B cell (primary cell): ENCODE measurements at regions of chr20 and their contacts with region 1.

Region 1: DNA sequence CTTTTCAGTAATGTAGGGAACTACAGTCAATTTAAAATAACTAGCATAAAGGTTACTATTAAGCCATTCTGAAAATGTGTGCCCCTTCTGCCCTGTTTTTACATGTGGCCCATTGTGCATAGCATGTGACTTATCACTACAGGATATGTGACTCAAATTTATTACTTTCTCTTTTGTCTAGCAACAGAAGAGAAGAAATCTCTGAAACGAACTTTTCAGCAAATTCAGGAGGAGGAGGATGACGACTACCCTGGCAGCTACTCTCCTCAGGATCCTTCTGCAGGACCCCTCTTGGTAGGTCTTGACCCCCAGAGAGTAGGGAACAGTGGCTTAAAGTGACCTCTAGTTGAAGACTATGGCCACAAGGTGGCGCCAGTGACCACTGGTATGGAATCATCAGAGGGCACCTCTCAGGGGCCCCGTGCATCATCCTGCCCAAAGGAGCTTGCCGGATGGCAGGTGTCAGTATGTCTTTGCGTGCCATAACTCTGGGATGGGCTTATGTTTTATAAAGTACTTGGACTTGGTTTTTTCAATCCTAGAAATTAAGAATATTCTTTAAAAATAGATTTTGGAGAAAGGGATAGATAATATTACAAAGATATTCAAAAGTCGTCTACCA is 23.9 kb downstream of the RPRD1B start:
- DNase-seq: peak; percentile 86
- ATAC-seq: peak; percentile 96
- H3K4me3 ChIP-seq: no peak overlapping the region
- H3K4me3 Mint-ChIP-seq: no peak overlapping the region
- H3K27ac ChIP-seq: no peak overlapping the region
- H3K27ac Mint-ChIP-seq: peak overlapping the region; percentile 59
- H3K4me1 ChIP-seq: peaks cover 0 to 3% of the 10 kb centered on the region in 2 donors
- H3K4me1 Mint-ChIP-seq: peaks cover 13% of the 10 kb centered on the region
- H3K27me3 ChIP-seq: no peaks in the 10 kb centered on the region
- H3K27me3 Mint-ChIP-seq: no peaks in the 10 kb centered on the region
- CTCF ChIP-seq: peak; percentile 98

Region 2: DNA sequence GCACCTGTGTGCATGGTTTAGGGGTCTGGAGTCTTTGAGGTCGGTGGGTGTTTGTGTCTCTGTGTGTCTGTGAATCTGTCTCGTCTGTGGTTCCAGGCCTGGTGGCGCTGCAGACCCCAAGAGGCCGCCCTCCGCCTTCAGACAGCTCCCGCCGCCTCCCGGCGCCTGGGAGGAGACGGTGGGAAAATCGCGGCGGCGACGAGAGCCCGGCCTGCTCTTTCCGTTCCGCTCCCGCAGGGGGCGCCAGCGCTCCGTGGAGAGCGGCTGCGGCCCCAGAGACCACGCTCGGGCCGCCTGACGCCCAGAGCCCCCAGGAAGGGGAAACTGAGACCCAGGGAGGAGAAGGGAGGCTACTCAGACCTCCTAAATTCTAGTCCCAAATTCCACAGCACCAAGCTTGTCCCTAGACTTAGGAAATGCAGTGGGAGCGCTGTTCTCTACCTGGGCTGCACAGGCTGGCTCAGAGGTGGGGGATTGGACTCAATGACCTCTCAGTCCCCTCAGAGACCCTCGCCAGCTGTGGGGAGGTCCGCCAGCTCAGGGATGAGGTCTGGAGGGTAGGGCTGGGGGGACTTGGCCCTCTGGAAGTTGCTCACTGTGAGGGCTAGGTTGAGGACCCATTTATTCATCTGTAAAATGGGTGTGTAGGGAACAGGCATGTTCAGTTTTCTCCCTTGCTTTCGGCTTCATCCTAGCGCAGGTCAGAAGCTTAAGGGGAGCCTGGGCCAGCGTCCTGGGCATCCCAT is 492.9 kb before region 1 on chr20:
- CTCF ChIA-PET with region 1: interaction called, 15 read pairs
- POLR2A ChIA-PET with region 1: no interaction called
- intact Hi-C with region 1: no loop called
- DNase-seq: peak; percentile 67
- ATAC-seq: peak; percentile 49
- H3K4me3 ChIP-seq: no peak overlapping the region
- H3K4me3 Mint-ChIP-seq: no peak overlapping the region
- H3K27ac ChIP-seq: no peak overlapping the region
- H3K27ac Mint-ChIP-seq: no peak overlapping the region
- H3K4me1 ChIP-seq: peaks cover 3 to 5% of the 10 kb centered on the region in 2 donors
- H3K4me1 Mint-ChIP-seq: peaks cover 2% of the 10 kb centered on the region
- H3K27me3 ChIP-seq: peaks cover 0 to 31% (median 13%) of the 10 kb centered on the region in 4 experiments
- H3K27me3 Mint-ChIP-seq: peaks cover 43% of the 10 kb centered on the region
- CTCF ChIP-seq: peak; percentile 96

Region 3: GRCh38 chr20:37726971-37727956 is 330.2 kb before region 1 on chr20:
- CTCF ChIA-PET with region 1: no interaction called
- POLR2A ChIA-PET with region 1: no interaction called
- intact Hi-C with region 1: no loop called
- DNase-seq: no peak
- ATAC-seq: no peak
- H3K4me3 ChIP-seq: no peak overlapping the region
- H3K4me3 Mint-ChIP-seq: no peak overlapping the region
- H3K27ac ChIP-seq: no peak overlapping the region
- H3K27ac Mint-ChIP-seq: no peak overlapping the region
- H3K4me1 ChIP-seq: no peaks in the 10 kb centered on the region
- H3K4me1 Mint-ChIP-seq: peaks cover 33% of the 10 kb centered on the region
- H3K27me3 ChIP-seq: no peaks in the 10 kb centered on the region
- H3K27me3 Mint-ChIP-seq: no peaks in the 10 kb centered on the region
- CTCF ChIP-seq: no peak

Region 4: DNA sequence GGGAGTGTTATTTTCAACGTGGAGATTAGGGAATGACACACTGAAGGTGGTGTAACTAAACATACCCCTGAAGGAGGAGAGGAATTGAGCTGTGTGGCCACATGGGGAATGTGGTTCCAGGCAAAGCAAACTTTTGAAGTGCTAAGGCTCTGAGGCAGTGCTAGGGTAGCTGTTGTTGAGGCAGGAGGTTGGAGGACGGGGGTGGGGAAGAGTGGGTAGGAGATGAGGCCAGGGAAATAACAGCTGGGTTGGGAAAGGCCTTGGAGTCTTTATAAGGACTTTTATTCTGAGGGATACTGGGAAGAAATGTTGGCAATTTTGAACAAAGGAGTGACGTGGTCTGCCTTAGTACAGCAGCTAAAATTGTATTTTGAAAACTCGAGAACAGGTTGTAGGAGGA is 10.9 kb before region 1 on chr20:
- CTCF ChIA-PET with region 1: interaction called, 20 read pairs
- POLR2A ChIA-PET with region 1: no interaction called
- intact Hi-C with region 1: no loop called
- DNase-seq: no peak
- ATAC-seq: no peak
- H3K4me3 ChIP-seq: no peak overlapping the region
- H3K4me3 Mint-ChIP-seq: no peak overlapping the region
- H3K27ac ChIP-seq: no peak overlapping the region
- H3K27ac Mint-ChIP-seq: no peak overlapping the region
- H3K4me1 ChIP-seq: no peaks in the 10 kb centered on the region
- H3K4me1 Mint-ChIP-seq: peaks cover 8% of the 10 kb centered on the region
- H3K27me3 ChIP-seq: no peaks in the 10 kb centered on the region
- H3K27me3 Mint-ChIP-seq: no peaks in the 10 kb centered on the region
- CTCF ChIP-seq: no peak

Region 5: GRCh38 chr20:38084400-38084951 is 27.0 kb after region 1 on chr20:
- CTCF ChIA-PET with region 1: interaction called, 11 read pairs
- POLR2A ChIA-PET with region 1: no interaction called
- intact Hi-C with region 1: no loop called
- DNase-seq: no peak
- ATAC-seq: no peak
- H3K4me3 ChIP-seq: no peak overlapping the region
- H3K4me3 Mint-ChIP-seq: no peak overlapping the region
- H3K27ac ChIP-seq: no peak overlapping the region
- H3K27ac Mint-ChIP-seq: no peak overlapping the region
- H3K4me1 ChIP-seq: no peaks in the 10 kb centered on the region
- H3K4me1 Mint-ChIP-seq: peaks cover 41% of the 10 kb centered on the region
- H3K27me3 ChIP-seq: no peaks in the 10 kb centered on the region
- H3K27me3 Mint-ChIP-seq: no peaks in the 10 kb centered on the region
- CTCF ChIP-seq: no peak

Region 6: GRCh38 chr20:38113401-38114325 is 56.2 kb after region 1 on chr20:
- CTCF ChIA-PET with region 1: interaction called, 39 read pairs
- POLR2A ChIA-PET with region 1: no interaction called
- intact Hi-C with region 1: loop called (anchors 1 kb)
- DNase-seq: no peak
- ATAC-seq: no peak
- H3K4me3 ChIP-seq: no peak overlapping the region
- H3K4me3 Mint-ChIP-seq: no peak overlapping the region
- H3K27ac ChIP-seq: no peak overlapping the region
- H3K27ac Mint-ChIP-seq: no peak overlapping the region
- H3K4me1 ChIP-seq: peaks cover 0 to 3% of the 10 kb centered on the region in 2 donors
- H3K4me1 Mint-ChIP-seq: peaks cover 3% of the 10 kb centered on the region
- H3K27me3 ChIP-seq: no peaks in the 10 kb centered on the region
- H3K27me3 Mint-ChIP-seq: no peaks in the 10 kb centered on the region
- CTCF ChIP-seq: no peak

Region 7: DNA sequence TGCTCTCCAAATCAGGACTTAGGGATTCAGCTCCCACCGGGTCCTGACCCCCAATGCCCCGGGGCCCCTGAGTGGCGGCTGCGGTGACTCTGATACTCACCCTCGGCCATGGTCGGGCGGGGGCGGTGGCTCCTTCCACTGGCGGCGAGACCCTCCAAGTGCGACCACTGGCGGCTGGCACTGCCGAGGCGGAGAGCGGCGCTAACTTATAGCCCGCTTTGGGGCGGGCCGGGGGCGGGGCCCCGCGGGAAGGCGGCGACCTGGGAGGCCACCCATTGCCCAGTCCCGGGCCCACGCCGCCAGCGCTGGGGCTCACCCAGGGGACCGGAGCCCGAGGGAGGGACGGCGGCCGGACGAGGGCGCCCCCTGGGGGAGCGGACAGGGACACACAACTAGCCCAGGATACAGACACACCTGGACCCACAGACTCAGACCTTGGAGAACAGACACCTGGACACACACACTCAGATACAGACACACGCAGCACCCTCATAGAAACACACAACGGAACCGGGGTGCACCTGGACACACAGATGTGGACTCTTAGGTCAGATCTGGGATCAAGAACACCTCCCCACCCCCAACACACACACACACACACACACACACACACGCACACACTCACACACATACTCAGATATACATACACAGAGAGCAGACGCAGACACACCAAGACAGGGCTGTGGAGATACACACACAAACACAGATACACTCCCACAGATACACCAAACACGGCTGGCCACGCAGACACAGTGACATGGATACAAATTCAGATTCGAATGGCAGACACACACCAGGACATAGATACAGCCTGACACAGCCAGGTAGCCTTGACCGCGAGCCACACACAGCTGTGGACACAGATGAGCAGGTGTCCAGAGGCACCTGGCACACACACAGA is 107.9 kb after region 1 on chr20 and contains the start of gene TGM2:
- CTCF ChIA-PET with region 1: interaction called, 68 read pairs
- POLR2A ChIA-PET with region 1: no interaction called
- intact Hi-C with region 1: loop called (anchors 1 kb)
- DNase-seq: peak; percentile 82
- ATAC-seq: peak; percentile 95
- H3K4me3 ChIP-seq: peak within 1 kb of the TSS in 4 of 5 experiments; percentile 18 to 44 (median 32)
- H3K4me3 Mint-ChIP-seq: peak within 1 kb of the TSS; percentile 64
- H3K27ac ChIP-seq: no peak within 1 kb of the TSS
- H3K27ac Mint-ChIP-seq: peak within 1 kb of the TSS; percentile 82
- H3K4me1 ChIP-seq: peaks cover 18 to 28% of the 10 kb centered on the region in 2 donors
- H3K4me1 Mint-ChIP-seq: peaks cover 29% of the 10 kb centered on the region
- H3K27me3 ChIP-seq: peaks cover 0 to 7% (median 0%) of the 10 kb centered on the region in 4 experiments
- H3K27me3 Mint-ChIP-seq: no peaks in the 10 kb centered on the region
- CTCF ChIP-seq: peak; percentile 83
- total RNA-seq, gene TGM2: 58.8 and 60.8 TPM in 2 replicates